PC-3 (cell line): ENCODE measurements at regions of chr1 and their contacts with region 1.

Region 1: GRCh38 chr1:36203554-36204346 is 20.5 kb upstream of the THRAP3 start:
- DNase-seq: no peak
- ATAC-seq: no peak
- H3K4me3 ChIP-seq: no peak overlapping the region
- H3K27ac ChIP-seq: no peak overlapping the region
- H3K4me1 ChIP-seq: peaks cover 13% of the 10 kb centered on the region; the same call in 1 of the 2 replicates
- H3K27me3 ChIP-seq: no peaks in the 10 kb centered on the region
- CTCF ChIP-seq: no peak

Region 2: DNA sequence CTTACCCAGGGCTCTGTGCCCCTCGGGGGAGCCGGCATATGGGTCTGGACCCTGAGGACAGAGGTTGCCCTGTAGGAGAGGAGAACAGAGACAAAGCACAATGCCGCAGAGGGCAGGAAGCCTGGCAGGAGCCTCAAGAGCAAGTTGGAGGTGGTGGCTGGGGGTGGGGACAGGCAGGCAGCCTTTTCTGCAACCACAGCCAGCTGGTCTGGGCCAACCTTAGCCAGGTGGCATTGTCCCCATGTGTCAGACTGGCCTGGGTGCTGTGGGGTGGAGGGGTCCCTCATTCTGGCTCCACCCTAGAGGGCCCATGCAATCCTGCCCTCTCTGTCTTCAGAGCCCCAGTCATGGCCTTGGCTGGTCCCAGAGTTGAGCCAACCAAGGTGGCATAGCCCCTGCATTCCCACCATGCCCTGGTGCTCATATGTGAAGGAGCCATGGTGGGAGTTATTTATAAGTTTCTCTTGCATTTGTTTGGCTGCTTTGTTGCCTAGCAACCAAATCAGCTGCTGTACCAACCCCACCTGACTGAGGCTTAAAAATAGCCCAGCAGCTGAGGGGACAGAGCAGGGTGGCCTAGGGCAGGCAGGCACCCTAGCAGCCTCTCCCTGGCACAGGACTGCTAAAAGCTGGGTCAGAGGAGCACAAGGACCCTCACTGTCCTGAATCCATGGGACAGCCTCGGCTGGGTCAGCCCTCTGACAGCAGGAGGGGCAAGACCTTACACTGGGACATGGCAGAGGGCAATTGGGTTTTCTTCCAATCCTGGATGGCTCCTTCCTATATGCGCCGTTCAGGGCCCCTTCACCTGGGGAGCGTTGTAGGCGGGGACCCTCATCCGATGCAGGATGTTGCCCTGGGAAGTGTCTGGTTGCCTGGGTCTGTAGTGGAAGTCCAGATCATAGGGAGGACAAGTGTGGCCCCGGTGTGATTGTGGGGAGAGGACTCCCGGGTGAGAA is 28.3 kb before region 1 on chr1:
- CTCF ChIA-PET with region 1: no interaction called
- POLR2A ChIA-PET with region 1: no interaction called
- intact Hi-C with region 1: no loop called
- DNase-seq: no peak
- ATAC-seq: no peak
- H3K4me3 ChIP-seq: no peak overlapping the region
- H3K27ac ChIP-seq: no peak overlapping the region
- H3K4me1 ChIP-seq: peaks cover 18% of the 10 kb centered on the region
- H3K27me3 ChIP-seq: no peaks in the 10 kb centered on the region
- CTCF ChIP-seq: no peak

Region 3: GRCh38 chr1:36217670-36218069 is 13.9 kb after region 1 on chr1:
- CTCF ChIA-PET with region 1: interaction called, 14 read pairs
- POLR2A ChIA-PET with region 1: no interaction called
- intact Hi-C with region 1: no loop called
- DNase-seq: peak; percentile 46
- ATAC-seq: peak; percentile 98
- H3K4me3 ChIP-seq: no peak overlapping the region
- H3K27ac ChIP-seq: no peak overlapping the region
- H3K4me1 ChIP-seq: no peaks in the 10 kb centered on the region
- H3K27me3 ChIP-seq: no peaks in the 10 kb centered on the region
- CTCF ChIP-seq: peak; percentile 59